Dorsolateral prefrontal cortex (tissue), 120 donors: ENCODE measurements at regions of chr19 and their contacts with region 1.

Region 1: GRCh38 chr19:53808710-53809125 is 15.4 kb downstream of the NLRP12 start:
- DNase-seq: no peak
- H3K4me3 ChIP-seq: no peak overlapping the region
- H3K27ac ChIP-seq: no peak overlapping the region
- H3K27me3 ChIP-seq: no peaks in the 10 kb centered on the region
- CTCF ChIP-seq: peak; percentile 11 to 75 (median 54)

Region 2: DNA sequence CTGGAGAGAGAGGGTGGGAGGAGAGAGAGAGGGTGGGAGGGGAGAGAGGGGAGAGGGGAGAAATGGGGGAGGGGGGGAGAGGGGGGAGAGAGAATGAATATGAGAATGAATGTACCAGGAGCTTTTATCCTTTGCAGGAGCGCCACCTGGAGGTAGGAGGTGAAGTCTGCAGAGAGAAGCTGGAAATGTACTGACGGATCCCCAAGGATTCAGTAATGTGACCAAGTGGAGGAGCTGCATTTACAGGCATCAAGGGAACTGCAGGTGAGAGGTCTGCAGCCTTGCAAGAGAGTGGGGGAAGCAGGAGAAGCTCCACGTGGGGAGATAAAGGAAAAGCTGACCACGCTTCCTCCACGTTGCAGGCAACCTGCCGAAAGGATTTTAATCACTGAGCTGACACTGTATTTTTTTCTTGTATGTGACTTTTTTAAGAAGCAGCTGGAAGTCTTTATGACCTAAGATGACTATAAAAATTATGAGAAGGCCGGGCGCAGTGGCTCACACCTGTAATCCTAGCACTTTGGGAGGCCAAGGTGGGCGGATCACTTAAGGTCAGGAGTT is 221.3 kb after region 1 on chr19:
- intact Hi-C with region 1: loop called (anchors 2 to 10 kb)
- DNase-seq: peak; percentile 20 to 81 (median 62)
- H3K4me3 ChIP-seq: no peak overlapping the region
- H3K27ac ChIP-seq: no peak overlapping the region
- H3K27me3 ChIP-seq: peaks cover 0 to 8% (median 0%) of the 10 kb centered on the region in 45 donors
- CTCF ChIP-seq: peak in 54 of 56 donors; percentile 34 to 71 (median 60)